Cardiac septum (tissue), 1 donor: ENCODE measurements at regions of chr6 and their contacts with region 1.

Region 1: DNA sequence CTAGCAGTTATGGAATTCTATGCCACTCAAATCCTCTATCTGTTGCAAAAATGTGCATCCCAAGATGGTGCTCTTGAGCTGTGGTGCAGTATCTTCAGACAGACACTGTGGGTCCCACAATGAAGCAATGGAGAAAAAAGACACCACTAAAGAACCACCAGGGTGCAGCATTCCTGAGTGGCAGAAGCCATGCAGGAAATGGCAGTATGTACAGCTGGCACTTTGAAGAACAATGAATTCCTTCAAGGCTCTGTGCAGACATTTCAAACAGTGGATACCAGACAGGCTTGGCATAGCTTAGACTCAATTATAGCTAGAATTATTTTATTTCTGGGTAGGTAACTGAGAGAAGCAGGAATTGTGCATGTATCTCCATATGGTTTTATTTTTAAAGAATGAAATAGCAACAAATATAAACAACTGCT is 24.0 kb upstream of the HDAC2 start:
- DNase-seq: no peak

Region 2: DNA sequence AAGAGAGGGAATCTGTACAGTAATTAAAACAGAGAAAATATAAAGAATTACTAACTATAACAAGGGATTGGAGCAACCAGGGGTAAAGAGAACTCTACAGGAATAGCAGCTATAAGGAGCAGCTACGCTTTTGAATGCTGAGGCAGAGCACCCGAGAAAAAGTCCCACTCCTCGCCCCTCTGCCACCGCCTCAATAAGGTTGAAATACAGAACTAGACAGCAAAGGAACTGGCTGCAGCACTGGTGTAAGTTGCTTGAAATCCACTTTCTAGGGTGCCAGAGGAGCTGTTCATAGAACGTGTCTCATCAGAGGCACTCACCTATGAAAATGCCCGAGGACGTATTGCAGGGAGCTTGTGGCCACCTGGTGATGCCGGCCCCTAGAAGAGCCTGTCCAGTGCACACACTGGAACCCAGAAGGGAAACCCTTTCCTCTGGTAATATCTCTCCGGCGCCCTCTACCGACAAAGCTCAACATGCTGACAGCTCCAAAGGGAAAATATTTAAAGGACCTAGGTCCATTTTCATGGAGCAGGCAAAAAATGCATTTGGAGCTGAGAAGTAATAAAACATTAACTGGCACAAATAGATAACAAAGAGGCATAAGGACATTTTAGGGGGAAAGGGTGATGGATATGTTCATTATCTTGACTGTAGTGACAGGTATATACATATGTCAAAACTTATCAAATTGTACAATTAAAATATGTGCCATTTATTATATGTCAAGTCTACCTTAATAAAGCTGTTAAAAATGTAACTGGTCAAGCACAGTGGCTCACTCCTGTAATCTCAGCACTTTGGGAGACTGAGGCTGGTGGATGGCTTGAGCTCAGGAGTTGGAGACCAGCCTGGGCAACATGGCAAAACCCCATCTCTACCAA is 113.4 kb after region 1 on chr6:
- intact Hi-C with region 1: loop called (anchors 5 kb)
- DNase-seq: no peak

Region 3: GRCh38 chr6:114304304-114304887 is 309.5 kb after region 1 on chr6:
- intact Hi-C with region 1: loop called (anchors 10 kb)
- DNase-seq: no peak